ENCODE measurements at regions of chr19 and their contacts with region 1.

Region 1: DNA sequence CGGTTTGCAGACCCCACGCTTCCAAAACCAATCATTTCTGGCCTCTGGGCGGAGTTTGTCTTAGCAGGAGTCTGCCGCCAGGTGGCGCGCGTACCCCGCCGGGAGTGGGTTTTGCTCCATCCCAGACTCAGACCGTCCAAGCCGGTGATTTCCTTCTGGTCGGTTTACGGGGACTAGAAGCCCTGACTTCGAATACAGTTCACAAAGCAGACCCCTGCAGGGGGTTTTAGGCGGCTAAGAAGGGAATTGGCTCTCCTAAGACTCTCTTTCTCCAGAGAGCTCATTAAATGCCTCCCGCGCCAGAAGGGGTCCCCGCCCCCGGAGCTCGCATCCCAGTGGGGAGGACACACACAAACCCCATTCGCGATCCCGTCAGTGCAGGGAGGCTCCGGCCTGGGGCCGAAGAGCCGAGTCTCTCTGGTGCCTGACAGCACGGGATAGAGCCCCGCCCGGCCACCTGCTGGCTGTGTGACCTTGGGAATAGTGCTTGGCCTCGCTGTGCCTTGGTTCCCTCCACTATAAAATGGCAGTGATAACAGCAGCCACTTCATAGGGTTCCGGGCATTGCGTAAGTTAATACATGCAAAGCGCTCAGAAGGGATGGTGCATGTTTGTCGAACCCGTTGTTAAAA is 8.6 kb upstream of the NUP62 start:
- DNase-seq: peak; percentile 61
- ATAC-seq: peak; percentile 99
- H3K4me3 ChIP-seq: 0 out of 2 replicates have a peak overlapping the region, but pooled peaks have one; percentile 17
- H3K27ac ChIP-seq: no peak overlapping the region
- H3K4me1 ChIP-seq: no peaks in the 10 kb centered on the region
- H3K27me3 ChIP-seq: no peaks in the 10 kb centered on the region; the same call in 1 of the 2 replicates
- CTCF ChIP-seq: peak; percentile 98
- POLR2A ChIP-seq: peak; percentile 63; the same call in 1 of the 2 replicates
- RAD21 ChIP-seq: peak; percentile 98

Region 2: GRCh38 chr19:49891393-49891792 is 46.5 kb before region 1 on chr19:
- CTCF ChIA-PET with region 1: interaction called, 10 read pairs
- POLR2A ChIA-PET with region 1: no interaction called
- dilution Hi-C with region 1: no loop called
- in situ Hi-C with region 1: no loop called
- intact Hi-C with region 1: no loop called
- DNase-seq: no peak
- ATAC-seq: no peak
- H3K4me3 ChIP-seq: no peak overlapping the region
- H3K27ac ChIP-seq: no peak overlapping the region
- H3K4me1 ChIP-seq: peaks cover 2% of the 10 kb centered on the region; the same call in 1 of the 2 replicates
- H3K27me3 ChIP-seq: peaks cover 8% of the 10 kb centered on the region; the same call in 1 of the 2 replicates
- CTCF ChIP-seq: no peak
- POLR2A ChIP-seq: no peak
- RAD21 ChIP-seq: no peak